ENCODE measurements at regions of chr10 and their contacts with region 1.

Region 1: GRCh38 chr10:29689001-29689400 is 54.2 kb upstream of the SVIL start:
- DNase-seq: peak; percentile 50
- ATAC-seq: peak; percentile 98
- H3K4me3 Mint-ChIP-seq: no peak overlapping the region
- H3K27ac Mint-ChIP-seq: no peak overlapping the region
- H3K4me1 Mint-ChIP-seq: peaks cover 49% of the 10 kb centered on the region
- H3K27me3 Mint-ChIP-seq: no peaks in the 10 kb centered on the region

Region 2: DNA sequence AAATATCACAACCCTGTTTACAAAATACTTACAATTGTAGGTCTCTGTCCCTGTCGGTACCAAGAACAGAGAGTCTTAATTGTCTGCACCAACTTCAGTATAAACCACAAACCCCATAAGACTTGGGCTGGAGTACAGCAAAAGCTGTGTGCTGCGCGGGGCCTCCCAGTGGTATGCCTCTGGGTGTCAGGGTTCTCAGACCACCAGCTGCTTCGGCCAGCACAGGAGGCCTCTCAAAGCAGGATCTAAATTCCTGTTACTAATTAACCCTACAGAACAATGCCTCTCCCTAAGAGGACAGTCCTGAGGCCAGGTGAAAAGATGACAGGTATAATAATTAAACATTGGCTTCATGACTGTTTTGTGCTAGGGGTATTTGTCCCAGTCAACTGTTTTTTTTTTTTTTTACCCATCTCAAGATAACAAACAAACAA is 53.3 kb before region 1 on chr10:
- CTCF ChIA-PET with region 1: no interaction called
- POLR2A ChIA-PET with region 1: no interaction called
- intact Hi-C with region 1: loop called in 1 of 2 experiments (anchors 1 kb)
- DNase-seq: peak; percentile 22
- ATAC-seq: no peak
- H3K4me3 Mint-ChIP-seq: no peak overlapping the region
- H3K27ac Mint-ChIP-seq: no peak overlapping the region
- H3K4me1 Mint-ChIP-seq: peaks cover 46% of the 10 kb centered on the region
- H3K27me3 Mint-ChIP-seq: no peaks in the 10 kb centered on the region

Region 3: GRCh38 chr10:29725133-29725720 is 36.2 kb after region 1 on chr10:
- CTCF ChIA-PET with region 1: interaction called, 4 read pairs
- POLR2A ChIA-PET with region 1: interaction called, 6 read pairs
- intact Hi-C with region 1: loop called in 1 of 2 experiments (anchors 5 kb)
- DNase-seq: no peak
- ATAC-seq: no peak
- H3K4me3 Mint-ChIP-seq: no peak overlapping the region
- H3K27ac Mint-ChIP-seq: no peak overlapping the region
- H3K4me1 Mint-ChIP-seq: peaks cover 42% of the 10 kb centered on the region
- H3K27me3 Mint-ChIP-seq: no peaks in the 10 kb centered on the region

Region 4: GRCh38 chr10:30542001-30542894 is 853.2 kb after region 1 on chr10:
- CTCF ChIA-PET with region 1: no interaction called
- POLR2A ChIA-PET with region 1: no interaction called
- intact Hi-C with region 1: no loop called
- DNase-seq: no peak
- ATAC-seq: peak; percentile 44
- H3K4me3 Mint-ChIP-seq: no peak overlapping the region
- H3K27ac Mint-ChIP-seq: no peak overlapping the region
- H3K4me1 Mint-ChIP-seq: peaks cover 14% of the 10 kb centered on the region
- H3K27me3 Mint-ChIP-seq: peaks cover 2% of the 10 kb centered on the region